Posterior vena cava (tissue), 2 donors: ENCODE measurements at regions of chr11 and their contacts with region 1.

Region 1: GRCh38 chr11:79600711-79601110 is 159.9 kb upstream of the TENM4 start:
- DNase-seq: no peak

Region 2: GRCh38 chr11:79623375-79623774 is 22.7 kb after region 1 on chr11:
- intact Hi-C with region 1: loop called in 1 of 2 experiments (anchors 2 kb)
- DNase-seq: no peak